Colonic mucosa (tissue), 4 donors: ENCODE measurements at regions of chr5 and their contacts with region 1.

Region 1: GRCh38 chr5:120457839-120458507 is 6.1 kb upstream of the PRR16 start:
- DNase-seq: peak; percentile 80
- H3K4me3 ChIP-seq: peak overlapping the region; percentile 43
- H3K27ac ChIP-seq: no peak overlapping the region
- H3K4me1 ChIP-seq: no peaks in the 10 kb centered on the region
- H3K27me3 ChIP-seq: no peaks in the 10 kb centered on the region
- CTCF ChIP-seq: peak; percentile 70

Region 2: GRCh38 chr5:119470851-119471451 is 987.0 kb before region 1 on chr5:
- intact Hi-C with region 1: loop called (anchors 10 kb)
- DNase-seq: no peak
- H3K4me3 ChIP-seq: no peak overlapping the region
- H3K27ac ChIP-seq: no peak overlapping the region
- H3K4me1 ChIP-seq: no peaks in the 10 kb centered on the region
- H3K27me3 ChIP-seq: no peaks in the 10 kb centered on the region
- CTCF ChIP-seq: peak; percentile 44

Region 3: GRCh38 chr5:119943148-119943547 is 514.8 kb before region 1 on chr5:
- intact Hi-C with region 1: loop called (anchors 5 kb)
- DNase-seq: no peak
- H3K4me3 ChIP-seq: no peak overlapping the region
- H3K27ac ChIP-seq: no peak overlapping the region
- H3K4me1 ChIP-seq: no peaks in the 10 kb centered on the region
- H3K27me3 ChIP-seq: no peaks in the 10 kb centered on the region
- CTCF ChIP-seq: no peak

Region 4: DNA sequence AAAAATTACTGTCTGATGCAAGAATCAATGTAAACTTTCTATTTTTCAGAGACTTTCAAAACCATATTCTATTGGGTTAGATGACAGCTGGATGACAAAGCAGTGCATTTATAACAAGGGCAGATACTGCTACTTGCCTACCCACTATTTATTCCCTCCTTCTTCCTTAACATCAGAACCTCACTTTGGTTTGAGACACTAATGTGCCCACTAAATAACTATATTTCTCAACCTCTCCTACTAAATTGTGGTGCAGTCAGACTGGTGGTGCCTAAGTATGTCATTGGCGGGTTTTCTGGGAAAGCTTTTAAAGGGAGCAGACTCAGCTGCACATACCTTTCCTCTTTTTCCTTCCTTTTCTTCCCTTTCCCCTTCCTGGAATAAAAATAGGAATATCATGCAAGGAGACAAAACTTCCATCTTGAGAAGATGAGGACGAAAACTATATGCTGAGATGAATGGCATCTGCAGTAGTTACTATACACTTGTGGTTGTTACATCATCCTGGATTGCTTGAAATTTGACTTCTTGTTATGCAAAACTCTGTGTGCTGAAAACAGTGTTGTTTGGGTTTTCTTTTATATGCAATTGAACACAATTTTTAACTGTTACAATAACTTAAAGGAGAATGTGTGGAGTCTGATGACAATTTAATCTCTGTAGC is 50.0 kb after region 1 on chr5:
- intact Hi-C with region 1: no loop called
- DNase-seq: no peak
- H3K4me3 ChIP-seq: no peak overlapping the region
- H3K27ac ChIP-seq: no peak overlapping the region
- H3K4me1 ChIP-seq: no peaks in the 10 kb centered on the region
- H3K27me3 ChIP-seq: no peaks in the 10 kb centered on the region
- CTCF ChIP-seq: no peak